Caco-2 (cell line): ENCODE measurements at regions of chr19 and their contacts with region 1.

Region 1: GRCh38 chr19:56333505-56333904 is 18.9 kb upstream of the ZSCAN5A start:
- DNase-seq: peak; percentile 58 to 70
- H3K4me3 ChIP-seq: no peak overlapping the region
- H3K4me3 Mint-ChIP-seq: no peak overlapping the region
- H3K27ac Mint-ChIP-seq: no peak overlapping the region
- H3K4me1 ChIP-seq: no peaks in the 10 kb centered on the region
- H3K4me1 Mint-ChIP-seq: no peaks in the 10 kb centered on the region
- H3K27me3 ChIP-seq: no peaks in the 10 kb centered on the region
- H3K27me3 Mint-ChIP-seq: no peaks in the 10 kb centered on the region
- CTCF ChIP-seq: peak; percentile 83 to 89

Region 2: GRCh38 chr19:56066152-56067023 is 267.1 kb before region 1 on chr19:
- CTCF ChIA-PET with region 1: interaction called, 58 read pairs
- POLR2A ChIA-PET with region 1: no interaction called
- intact Hi-C with region 1: loop called (anchors 1 kb)
- DNase-seq: peak; percentile 77 to 81
- H3K4me3 ChIP-seq: no peak overlapping the region
- H3K4me3 Mint-ChIP-seq: peak overlapping the region; percentile 52
- H3K27ac Mint-ChIP-seq: no peak overlapping the region
- H3K4me1 ChIP-seq: 0 out of 2 replicates have a peak, but pooled peaks cover 3% of the 10 kb centered on the region
- H3K4me1 Mint-ChIP-seq: no peaks in the 10 kb centered on the region
- H3K27me3 ChIP-seq: no peaks in the 10 kb centered on the region
- H3K27me3 Mint-ChIP-seq: peaks cover 18% of the 10 kb centered on the region
- CTCF ChIP-seq: peak; percentile 95 to 96

Region 3: DNA sequence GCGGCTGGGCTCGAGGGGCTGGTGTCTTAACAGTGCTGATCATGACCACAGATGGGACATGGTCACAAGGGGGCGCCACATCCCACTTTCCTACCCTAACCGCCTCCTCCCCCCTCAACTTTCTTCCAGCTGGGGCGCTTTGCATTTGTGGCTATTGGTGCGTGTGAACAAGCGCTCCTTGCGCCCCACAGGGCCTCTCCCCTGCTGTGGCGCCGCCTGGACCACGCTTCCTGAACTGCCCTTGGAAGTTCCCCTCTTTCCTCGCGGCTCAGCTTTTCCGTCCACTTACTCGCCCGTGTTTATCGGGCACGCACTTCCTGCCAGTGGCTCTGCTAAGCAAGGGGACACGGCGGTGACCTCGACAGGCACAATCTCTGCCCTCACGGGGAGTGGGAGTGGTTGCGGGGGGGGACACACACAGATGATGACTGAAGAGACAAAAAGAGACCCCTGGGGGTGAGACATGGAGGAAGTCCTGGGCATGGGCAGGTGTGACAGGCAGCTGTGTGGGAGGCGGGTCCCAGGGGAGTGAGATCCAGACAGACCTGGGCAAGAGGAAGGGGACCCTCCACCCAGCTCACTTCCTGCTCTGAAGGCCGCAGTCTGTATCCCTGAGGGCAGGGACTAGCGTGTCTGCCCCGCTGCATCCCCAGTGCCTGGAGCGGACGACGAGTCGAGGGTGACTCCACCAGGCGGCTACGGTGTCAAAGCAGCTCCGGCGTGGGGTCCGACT is 252.7 kb before region 1 on chr19:
- CTCF ChIA-PET with region 1: interaction called, 18 read pairs
- POLR2A ChIA-PET with region 1: no interaction called
- intact Hi-C with region 1: loop called (anchors 1 kb)
- DNase-seq: peak in 1 of 2 experiments; percentile 55
- H3K4me3 ChIP-seq: no peak overlapping the region
- H3K4me3 Mint-ChIP-seq: no peak overlapping the region
- H3K27ac Mint-ChIP-seq: peak overlapping the region; percentile 36
- H3K4me1 ChIP-seq: no peaks in the 10 kb centered on the region
- H3K4me1 Mint-ChIP-seq: peaks cover 8% of the 10 kb centered on the region
- H3K27me3 ChIP-seq: no peaks in the 10 kb centered on the region
- H3K27me3 Mint-ChIP-seq: no peaks in the 10 kb centered on the region
- CTCF ChIP-seq: peak in 1 of 2 experiments; percentile 29

Region 4: GRCh38 chr19:56140583-56141416 is 192.7 kb before region 1 on chr19 and contains the start of gene ZNF444:
- CTCF ChIA-PET with region 1: interaction called, 4 read pairs
- POLR2A ChIA-PET with region 1: interaction called, 13 read pairs
- intact Hi-C with region 1: no loop called
- DNase-seq: peak; percentile 99 to 100
- H3K4me3 ChIP-seq: peak within 1 kb of the TSS; percentile 70
- H3K4me3 Mint-ChIP-seq: peak within 1 kb of the TSS; percentile 87
- H3K27ac Mint-ChIP-seq: peak within 1 kb of the TSS; percentile 97
- H3K4me1 ChIP-seq: peaks cover 21% of the 10 kb centered on the region
- H3K4me1 Mint-ChIP-seq: peaks cover 36% of the 10 kb centered on the region
- H3K27me3 ChIP-seq: no peaks in the 10 kb centered on the region
- H3K27me3 Mint-ChIP-seq: no peaks in the 10 kb centered on the region
- CTCF ChIP-seq: no peak
- total RNA-seq, gene ZNF444: 92.2 and 95.6 TPM in 2 replicates

Region 5: DNA sequence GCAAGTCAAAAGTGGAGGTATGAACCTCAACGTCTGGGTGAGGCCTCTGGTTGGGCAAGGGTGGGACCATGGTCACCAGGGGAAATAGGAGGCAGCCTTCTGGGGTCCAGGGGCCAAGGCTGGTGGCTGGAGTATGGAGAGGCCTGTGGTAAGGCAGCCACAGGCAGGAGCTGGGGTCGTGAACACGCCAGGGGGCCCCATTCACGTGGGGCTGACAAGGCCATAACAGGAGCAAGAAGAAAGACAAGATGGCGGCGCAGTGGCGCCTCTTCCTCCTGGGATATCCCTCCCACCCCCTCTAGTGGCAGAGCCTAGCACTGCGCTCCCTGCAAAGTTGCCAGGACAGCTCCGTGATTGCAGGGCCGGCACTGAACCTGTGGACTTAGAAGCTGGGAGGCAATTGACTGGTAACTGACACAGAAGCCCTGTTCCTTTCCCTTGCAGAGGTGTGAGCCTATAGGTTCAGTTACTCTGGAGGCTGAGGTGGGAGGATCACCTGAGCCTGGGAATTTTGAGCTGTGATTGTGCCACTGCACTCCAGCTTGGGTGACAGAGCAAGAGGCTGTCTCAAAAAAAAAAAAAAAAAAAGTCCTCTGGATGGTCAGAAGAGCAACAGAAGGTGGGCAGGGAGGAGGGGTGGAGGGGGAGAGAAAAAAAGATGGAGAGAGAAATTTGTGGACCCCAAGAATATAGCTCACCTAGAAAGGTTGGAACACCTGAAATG is 80.6 kb before region 1 on chr19:
- CTCF ChIA-PET with region 1: interaction called, 227 read pairs
- POLR2A ChIA-PET with region 1: interaction called, 5 read pairs
- intact Hi-C with region 1: loop called (anchors 1 kb)
- DNase-seq: peak; percentile 74 to 82
- H3K4me3 ChIP-seq: no peak overlapping the region
- H3K4me3 Mint-ChIP-seq: no peak overlapping the region
- H3K27ac Mint-ChIP-seq: no peak overlapping the region
- H3K4me1 ChIP-seq: no peaks in the 10 kb centered on the region
- H3K4me1 Mint-ChIP-seq: no peaks in the 10 kb centered on the region
- H3K27me3 ChIP-seq: no peaks in the 10 kb centered on the region
- H3K27me3 Mint-ChIP-seq: no peaks in the 10 kb centered on the region
- CTCF ChIP-seq: peak; percentile 69 to 70

Region 6: DNA sequence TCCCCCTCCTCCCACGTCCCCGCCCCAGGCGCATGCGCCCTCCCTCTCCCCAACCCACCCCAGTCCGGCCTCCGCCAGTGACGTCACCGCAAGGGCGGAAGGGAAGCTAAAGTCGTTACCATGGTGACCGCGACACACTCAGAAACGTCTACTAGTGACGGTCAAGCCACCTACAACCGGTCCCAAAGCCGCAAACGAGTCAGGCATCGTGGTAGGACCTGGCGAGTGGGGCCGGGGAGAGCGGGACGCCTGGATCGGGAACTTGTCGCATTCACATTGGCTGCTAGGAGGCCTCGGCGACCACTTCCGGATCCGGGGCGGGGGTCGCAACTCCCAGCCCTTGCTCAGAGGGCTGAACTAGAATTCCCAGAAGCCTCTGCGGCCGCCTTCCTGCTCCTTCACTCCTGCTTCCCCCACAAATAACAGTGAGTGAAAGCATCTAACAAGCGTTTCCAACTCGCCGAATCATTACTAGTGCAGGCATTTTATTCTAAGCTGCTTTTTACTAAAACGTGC is 18.9 kb before region 1 on chr19 and contains the start of gene ZSCAN5A:
- CTCF ChIA-PET with region 1: interaction called, 21 read pairs
- POLR2A ChIA-PET with region 1: interaction called, 4 read pairs
- intact Hi-C with region 1: no loop called
- DNase-seq: peak; percentile 95 to 97
- H3K4me3 ChIP-seq: peak within 1 kb of the TSS; percentile 66
- H3K4me3 Mint-ChIP-seq: peak within 1 kb of the TSS; percentile 86
- H3K27ac Mint-ChIP-seq: peak within 1 kb of the TSS; percentile 98
- H3K4me1 ChIP-seq: peaks cover 9% of the 10 kb centered on the region; the same call in 1 of the 2 replicates
- H3K4me1 Mint-ChIP-seq: peaks cover 12% of the 10 kb centered on the region
- H3K27me3 ChIP-seq: no peaks in the 10 kb centered on the region
- H3K27me3 Mint-ChIP-seq: no peaks in the 10 kb centered on the region
- CTCF ChIP-seq: no peak
- total RNA-seq, gene ZSCAN5A: 10.9 and 11.3 TPM in 2 replicates

Region 7: GRCh38 chr19:56350416-56351045 is 17.0 kb after region 1 on chr19:
- CTCF ChIA-PET with region 1: interaction called, 10 read pairs
- POLR2A ChIA-PET with region 1: no interaction called
- intact Hi-C with region 1: no loop called
- DNase-seq: peak; percentile 45 to 46
- H3K4me3 ChIP-seq: no peak overlapping the region
- H3K4me3 Mint-ChIP-seq: no peak overlapping the region
- H3K27ac Mint-ChIP-seq: no peak overlapping the region
- H3K4me1 ChIP-seq: peaks cover under 1% of the 10 kb centered on the region; the same call in 1 of the 2 replicates
- H3K4me1 Mint-ChIP-seq: no peaks in the 10 kb centered on the region
- H3K27me3 ChIP-seq: no peaks in the 10 kb centered on the region
- H3K27me3 Mint-ChIP-seq: no peaks in the 10 kb centered on the region
- CTCF ChIP-seq: peak; percentile 71 to 74